Endothelial cell of umbilical vein (primary cell): ENCODE measurements at regions of chr7 and their contacts with region 1.

Region 1: GRCh38 chr7:21617916-21618390 is 75.1 kb downstream of the DNAH11 start:
- DNase-seq: peak; percentile 30
- H3K4me3 ChIP-seq: no peak overlapping the region
- H3K27ac ChIP-seq: peak overlapping the region; percentile 84
- H3K4me1 ChIP-seq: peaks cover 21% of the 10 kb centered on the region
- H3K27me3 ChIP-seq: no peaks in the 10 kb centered on the region
- CTCF ChIP-seq: no peak
- POLR2A ChIP-seq: no peak

Region 2: GRCh38 chr7:21542891-21543527 is 74.9 kb before region 1 on chr7 and contains the start of gene DNAH11:
- CTCF ChIA-PET with region 1: no interaction called
- POLR2A ChIA-PET with region 1: no interaction called
- dilution Hi-C with region 1: no loop called
- intact Hi-C with region 1: loop called (anchors 5 kb)
- DNase-seq: peak; percentile 23
- H3K4me3 ChIP-seq: peak within 1 kb of the TSS; percentile 43 to 56 (median 54)
- H3K27ac ChIP-seq: no peak within 1 kb of the TSS
- H3K4me1 ChIP-seq: peaks cover 13% of the 10 kb centered on the region
- H3K27me3 ChIP-seq: peaks cover 22 to 41% of the 10 kb centered on the region in 2 experiments
- CTCF ChIP-seq: peak in 1 of 2 donors; percentile 9
- POLR2A ChIP-seq: no peak
- total RNA-seq, gene DNAH11: 0.69 and 2.0 TPM in 2 replicates

Region 3: DNA sequence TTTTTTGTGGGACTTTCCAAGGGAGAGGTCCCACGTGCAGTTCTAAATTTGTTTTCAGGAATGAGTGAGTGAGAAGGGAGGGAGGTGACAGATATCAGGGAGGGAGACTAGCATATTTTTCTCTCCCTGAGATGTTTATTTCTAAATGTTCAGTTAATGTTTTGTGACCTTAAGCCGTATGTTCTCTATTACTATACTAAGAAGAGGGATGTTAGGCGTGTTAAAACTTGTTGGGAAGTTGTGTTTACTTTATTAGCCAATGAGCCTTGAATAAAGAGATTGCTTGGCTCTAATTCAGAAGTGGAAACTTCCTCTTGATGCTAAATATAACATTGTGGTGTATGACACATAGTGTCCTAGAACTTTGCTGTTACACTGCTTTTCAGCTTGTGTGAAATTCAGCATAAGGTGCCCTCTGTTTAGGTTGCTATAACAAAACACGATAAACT is 37.9 kb before region 1 on chr7:
- CTCF ChIA-PET with region 1: no interaction called
- POLR2A ChIA-PET with region 1: no interaction called
- dilution Hi-C with region 1: no loop called
- intact Hi-C with region 1: loop called (anchors 1 kb)
- DNase-seq: peak; percentile 53
- H3K4me3 ChIP-seq: no peak overlapping the region
- H3K27ac ChIP-seq: no peak overlapping the region
- H3K4me1 ChIP-seq: no peaks in the 10 kb centered on the region
- H3K27me3 ChIP-seq: no peaks in the 10 kb centered on the region
- CTCF ChIP-seq: no peak
- POLR2A ChIP-seq: no peak

Region 4: GRCh38 chr7:21850531-21851285 is 232.8 kb after region 1 on chr7:
- CTCF ChIA-PET with region 1: no interaction called
- POLR2A ChIA-PET with region 1: no interaction called
- dilution Hi-C with region 1: no loop called
- intact Hi-C with region 1: loop called (anchors 5 kb)
- DNase-seq: peak; percentile 48
- H3K4me3 ChIP-seq: peak overlapping the region in 1 of 3 experiments; percentile 34
- H3K27ac ChIP-seq: peak overlapping the region; percentile 76
- H3K4me1 ChIP-seq: peaks cover 26% of the 10 kb centered on the region
- H3K27me3 ChIP-seq: no peaks in the 10 kb centered on the region
- CTCF ChIP-seq: no peak
- POLR2A ChIP-seq: no peak

Region 5: GRCh38 chr7:21945454-21946227 is 327.7 kb after region 1 on chr7 and contains the start of gene CDCA7L:
- CTCF ChIA-PET with region 1: no interaction called
- POLR2A ChIA-PET with region 1: no interaction called
- dilution Hi-C with region 1: no loop called
- intact Hi-C with region 1: loop called (anchors 1 kb)
- DNase-seq: peak; percentile 82
- H3K4me3 ChIP-seq: peak within 1 kb of the TSS; percentile 59 to 91 (median 80)
- H3K27ac ChIP-seq: peak within 1 kb of the TSS; percentile 91
- H3K4me1 ChIP-seq: peaks cover 52% of the 10 kb centered on the region
- H3K27me3 ChIP-seq: no peaks in the 10 kb centered on the region
- CTCF ChIP-seq: no peak
- POLR2A ChIP-seq: peak; percentile 92
- total RNA-seq, gene CDCA7L: 91.6 and 93.7 TPM in 2 replicates